B cell (primary cell): ENCODE measurements at regions of chr4 and their contacts with region 1.

Region 1: DNA sequence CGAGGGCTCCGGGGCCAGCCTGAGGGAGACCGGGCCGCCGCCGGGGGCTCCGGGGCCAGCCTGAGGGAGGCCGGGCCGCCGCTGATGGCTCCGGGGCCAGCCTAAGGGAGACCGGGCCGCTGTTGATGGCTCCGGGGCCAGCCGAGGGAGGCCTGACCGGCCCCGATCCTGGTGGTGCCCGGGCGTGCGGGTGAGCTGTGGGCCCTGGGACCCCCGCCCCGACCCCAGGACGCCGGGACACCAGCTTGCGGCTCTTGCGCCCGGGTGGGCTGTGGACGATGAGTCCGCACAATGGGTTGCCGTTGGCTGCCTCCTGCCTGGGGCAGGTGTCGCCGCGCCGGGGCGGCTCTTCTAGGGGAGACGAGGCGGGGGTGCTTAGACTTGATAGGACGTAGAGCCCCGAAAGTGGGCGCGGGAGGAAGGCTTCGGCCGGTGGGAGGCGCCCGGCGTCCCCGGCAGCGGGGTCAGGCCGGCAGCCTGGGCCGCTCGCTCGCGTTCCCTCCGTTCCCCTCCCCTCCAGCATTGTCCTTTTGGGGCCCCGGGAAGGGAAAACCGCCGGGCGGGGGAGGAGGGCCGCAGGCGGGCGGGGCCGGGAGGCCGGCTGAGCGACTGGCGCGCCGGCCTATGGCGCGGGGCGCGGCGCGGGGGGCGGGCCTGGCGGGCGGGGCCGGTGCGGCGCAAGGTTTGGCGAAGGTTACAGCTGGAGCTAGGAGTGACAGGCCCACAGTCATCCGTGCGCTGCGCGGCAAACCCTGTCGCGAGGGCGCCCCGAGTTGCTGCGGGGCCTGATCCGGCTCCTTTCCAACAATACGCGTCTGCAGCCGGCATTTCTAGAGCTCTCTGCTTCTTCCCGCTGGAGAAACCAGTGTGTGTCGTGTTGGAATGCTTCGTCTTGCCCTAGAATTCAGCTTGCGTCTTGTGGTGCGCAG is 790 bp downstream of the KIAA0232 start:
- DNase-seq: peak; percentile 92
- ATAC-seq: peak; percentile 62
- H3K4me3 ChIP-seq: peak overlapping the region; percentile 35 to 90 (median 80)
- H3K4me3 Mint-ChIP-seq: peak overlapping the region; percentile 87
- H3K27ac ChIP-seq: peak overlapping the region; percentile 88 to 97
- H3K27ac Mint-ChIP-seq: peak overlapping the region; percentile 87
- H3K4me1 ChIP-seq: peaks cover 11 to 13% of the 10 kb centered on the region in 2 donors
- H3K4me1 Mint-ChIP-seq: peaks cover 28% of the 10 kb centered on the region
- H3K27me3 ChIP-seq: no peaks in the 10 kb centered on the region
- H3K27me3 Mint-ChIP-seq: no peaks in the 10 kb centered on the region
- CTCF ChIP-seq: peak; percentile 7

Region 2: DNA sequence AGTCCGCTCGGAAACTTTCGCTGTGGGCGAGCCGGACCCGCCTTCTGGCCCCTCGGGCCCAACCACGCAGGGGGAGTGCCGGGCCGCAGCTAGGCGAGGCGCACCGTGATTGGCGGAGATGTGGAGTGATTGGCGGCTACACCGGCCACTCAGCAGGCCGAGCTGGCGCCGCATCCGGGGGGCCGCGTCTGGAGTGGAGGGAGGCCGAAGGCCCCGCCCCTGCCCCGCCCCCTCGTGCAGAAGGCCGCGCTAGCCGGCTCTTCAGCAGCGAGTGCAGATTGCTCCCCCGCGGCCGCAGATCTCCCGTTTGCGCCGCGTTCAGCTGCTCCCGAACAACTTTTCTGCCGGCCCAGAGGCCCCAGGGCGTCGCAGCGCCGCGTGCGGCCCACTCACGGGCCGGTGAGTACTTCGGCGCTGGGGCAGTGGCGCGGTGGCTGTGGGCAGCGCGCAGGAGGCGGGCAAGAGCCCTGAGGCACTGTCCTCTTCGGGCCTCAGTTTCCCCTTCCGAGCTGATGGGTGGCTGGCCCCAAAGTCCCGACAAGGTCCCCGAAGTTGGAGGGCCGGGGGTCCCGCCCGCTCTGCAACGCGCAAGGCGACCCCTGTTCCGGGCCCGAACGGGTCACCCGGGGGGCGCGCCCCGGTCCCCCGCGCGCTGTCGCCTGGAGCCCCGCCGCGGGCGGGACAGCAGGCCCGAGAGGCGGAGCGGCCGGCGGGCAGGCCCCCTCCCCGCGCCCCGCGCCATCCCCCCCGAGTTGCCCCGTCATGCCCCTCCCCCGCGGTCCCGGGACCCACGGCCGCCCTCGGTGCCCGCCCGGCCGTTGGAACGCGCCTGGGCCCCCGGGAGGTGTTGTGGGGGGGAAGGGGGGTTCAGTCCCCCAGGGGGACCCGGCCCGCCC is 513.5 kb before region 1 on chr4 and contains the start of gene WFS1:
- CTCF ChIA-PET with region 1: no interaction called
- POLR2A ChIA-PET with region 1: no interaction called
- intact Hi-C with region 1: loop called (anchors 2 kb)
- DNase-seq: peak; percentile 99
- ATAC-seq: peak; percentile 99
- H3K4me3 ChIP-seq: peak within 1 kb of the TSS; percentile 13 to 95 (median 88)
- H3K4me3 Mint-ChIP-seq: peak within 1 kb of the TSS; percentile 92
- H3K27ac ChIP-seq: no peak within 1 kb of the TSS
- H3K27ac Mint-ChIP-seq: peak within 1 kb of the TSS; percentile 68
- H3K4me1 ChIP-seq: peaks cover 22 to 33% of the 10 kb centered on the region in 2 donors
- H3K4me1 Mint-ChIP-seq: peaks cover 32% of the 10 kb centered on the region
- H3K27me3 ChIP-seq: no peaks in the 10 kb centered on the region
- H3K27me3 Mint-ChIP-seq: peaks cover 1% of the 10 kb centered on the region
- CTCF ChIP-seq: no peak
- total RNA-seq, gene WFS1: 6.7 and 7.2 TPM in 2 replicates

Region 3: GRCh38 chr4:6574747-6575502 is 208.4 kb before region 1 on chr4 and contains the start of gene MAN2B2:
- CTCF ChIA-PET with region 1: interaction called, 3 read pairs
- POLR2A ChIA-PET with region 1: no interaction called
- intact Hi-C with region 1: loop called (anchors 2 kb)
- DNase-seq: peak; percentile 82
- ATAC-seq: peak; percentile 96
- H3K4me3 ChIP-seq: peak within 1 kb of the TSS; percentile 67 to 92 (median 82)
- H3K4me3 Mint-ChIP-seq: peak within 1 kb of the TSS; percentile 90
- H3K27ac ChIP-seq: peak within 1 kb of the TSS; percentile 64 to 83
- H3K27ac Mint-ChIP-seq: peak within 1 kb of the TSS; percentile 89
- H3K4me1 ChIP-seq: peaks cover 9 to 19% of the 10 kb centered on the region in 2 donors
- H3K4me1 Mint-ChIP-seq: peaks cover 16% of the 10 kb centered on the region
- H3K27me3 ChIP-seq: peaks cover 0 to 2% (median 0%) of the 10 kb centered on the region in 4 experiments
- H3K27me3 Mint-ChIP-seq: no peaks in the 10 kb centered on the region
- CTCF ChIP-seq: no peak
- total RNA-seq, gene MAN2B2: 37.0 TPM in 2 replicates

Region 4: DNA sequence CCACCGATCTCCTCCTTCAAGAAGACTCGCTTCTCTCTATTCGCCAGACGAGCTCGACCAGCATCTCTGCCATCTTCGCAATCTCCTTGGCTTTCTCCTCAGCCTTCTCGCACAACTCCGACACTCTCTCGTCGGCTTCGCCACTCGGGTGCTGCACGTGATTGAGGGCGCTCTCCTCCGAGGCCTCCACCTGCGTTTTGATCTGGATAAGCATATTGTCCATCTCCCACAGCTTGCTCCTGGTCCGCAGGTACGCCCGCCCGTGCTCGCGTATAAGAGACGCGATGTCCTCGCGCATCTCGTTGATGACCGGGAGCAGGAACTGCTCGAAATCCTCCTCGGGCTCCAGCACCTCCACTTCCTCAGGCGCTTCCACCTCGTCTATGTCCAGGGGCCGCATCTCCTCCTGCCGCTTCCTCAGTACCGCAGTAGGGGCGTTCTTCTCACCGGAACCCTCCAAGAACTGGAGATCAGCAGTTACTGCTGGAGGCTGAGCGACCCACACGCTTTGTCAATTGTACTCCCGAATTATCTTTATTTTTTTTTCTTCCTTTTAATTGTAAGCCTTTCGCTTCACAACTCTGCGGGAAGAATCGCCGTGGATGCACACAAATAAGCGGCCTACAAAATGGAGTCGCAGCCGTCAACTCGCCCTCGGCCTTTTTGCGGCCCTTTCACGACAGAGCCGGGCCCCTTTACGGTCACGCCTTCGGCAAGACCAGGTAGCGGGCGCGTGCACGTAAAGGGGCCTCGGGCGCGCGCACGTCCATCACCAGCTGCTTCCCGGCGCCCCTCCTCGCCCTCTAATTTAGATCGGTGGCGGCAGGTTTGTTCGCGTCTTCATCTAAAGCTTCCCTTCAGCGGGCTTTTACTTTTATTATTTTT is 73.8 kb before region 1 on chr4 and contains the start of gene MRFAP1L1:
- CTCF ChIA-PET with region 1: no interaction called
- POLR2A ChIA-PET with region 1: no interaction called
- intact Hi-C with region 1: loop called (anchors 1 kb)
- DNase-seq: peak; percentile 97
- ATAC-seq: peak; percentile 83
- H3K4me3 ChIP-seq: peak within 1 kb of the TSS; percentile 72 to 90 (median 77)
- H3K4me3 Mint-ChIP-seq: peak within 1 kb of the TSS; percentile 99
- H3K27ac ChIP-seq: peak within 1 kb of the TSS; percentile 80 to 83
- H3K27ac Mint-ChIP-seq: peak within 1 kb of the TSS; percentile 98
- H3K4me1 ChIP-seq: peaks cover 32 to 36% of the 10 kb centered on the region in 2 donors
- H3K4me1 Mint-ChIP-seq: peaks cover 57% of the 10 kb centered on the region
- H3K27me3 ChIP-seq: no peaks in the 10 kb centered on the region
- H3K27me3 Mint-ChIP-seq: no peaks in the 10 kb centered on the region
- CTCF ChIP-seq: no peak
- total RNA-seq, gene MRFAP1L1: 53.8 and 57.2 TPM in 2 replicates

Region 5: DNA sequence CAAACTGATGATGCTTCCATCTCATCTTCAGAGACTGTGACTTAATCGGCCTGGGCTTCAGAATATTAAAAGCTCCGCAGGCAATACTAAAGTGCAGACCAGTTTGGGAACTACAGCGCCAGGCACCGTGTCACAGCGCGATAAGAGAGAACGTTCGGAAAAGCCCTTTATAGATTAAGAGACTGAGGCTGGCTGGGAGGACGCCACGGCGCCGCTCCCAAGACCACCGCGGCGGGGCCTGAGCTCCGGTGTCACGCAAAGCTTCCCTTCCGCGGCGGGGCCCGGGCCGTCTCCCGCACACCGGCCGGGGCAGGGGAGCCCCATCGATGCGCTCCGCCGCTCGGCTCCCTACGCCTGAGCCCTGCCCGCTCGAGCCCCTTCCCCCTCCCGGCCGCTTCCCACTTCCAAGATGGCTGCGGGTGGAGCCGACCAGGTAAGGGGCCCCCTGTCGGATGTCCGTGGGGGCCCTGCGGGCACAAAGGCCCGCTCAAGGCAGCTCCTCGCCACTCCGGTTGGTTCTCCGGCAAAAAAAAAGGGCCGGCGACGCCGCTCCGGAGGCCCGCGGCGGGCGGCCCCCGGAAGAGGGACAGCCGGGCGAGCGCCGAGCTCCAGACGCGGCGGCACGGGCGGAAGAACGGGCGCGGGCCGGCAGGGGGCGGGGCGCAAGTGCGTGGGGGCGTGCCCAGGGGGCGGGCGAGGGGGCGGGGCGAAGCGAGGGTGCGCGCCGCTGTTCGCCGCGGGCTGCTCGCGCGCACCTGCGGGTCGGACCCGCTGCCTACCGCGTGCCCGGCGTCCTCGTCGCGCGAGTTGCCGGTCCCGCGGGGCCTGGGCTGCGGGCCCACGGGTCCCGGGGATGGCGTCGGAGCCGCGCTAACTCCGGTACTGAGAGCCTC is 126.0 kb after region 1 on chr4 and contains the start of gene TBC1D14:
- CTCF ChIA-PET with region 1: no interaction called
- POLR2A ChIA-PET with region 1: interaction called, 6 read pairs
- intact Hi-C with region 1: loop called (anchors 1 kb)
- DNase-seq: peak; percentile 94
- ATAC-seq: peak; percentile 89
- H3K4me3 ChIP-seq: peak within 1 kb of the TSS; percentile 72 to 85 (median 78)
- H3K4me3 Mint-ChIP-seq: peak within 1 kb of the TSS; percentile 95
- H3K27ac ChIP-seq: peak within 1 kb of the TSS; percentile 93 to 97
- H3K27ac Mint-ChIP-seq: peak within 1 kb of the TSS; percentile 94
- H3K4me1 ChIP-seq: peaks cover 33 to 43% of the 10 kb centered on the region in 2 donors
- H3K4me1 Mint-ChIP-seq: peaks cover 38% of the 10 kb centered on the region
- H3K27me3 ChIP-seq: peaks cover 0 to 3% (median 0%) of the 10 kb centered on the region in 4 experiments
- H3K27me3 Mint-ChIP-seq: peaks cover 8% of the 10 kb centered on the region
- CTCF ChIP-seq: no peak
- total RNA-seq, gene TBC1D14: 42.0 and 44.1 TPM in 2 replicates